A673 (cell line): ENCODE measurements at regions of chr12 and their contacts with region 1.

Region 1: GRCh38 chr12:57401165-57401564 is 29.7 kb downstream of the R3HDM2 start:
- DNase-seq: no peak
- H3K4me3 ChIP-seq: no peak overlapping the region
- H3K27ac ChIP-seq: no peak overlapping the region
- H3K4me1 ChIP-seq: no peaks in the 10 kb centered on the region
- H3K27me3 ChIP-seq: no peaks in the 10 kb centered on the region
- CTCF ChIP-seq: no peak

Region 2: DNA sequence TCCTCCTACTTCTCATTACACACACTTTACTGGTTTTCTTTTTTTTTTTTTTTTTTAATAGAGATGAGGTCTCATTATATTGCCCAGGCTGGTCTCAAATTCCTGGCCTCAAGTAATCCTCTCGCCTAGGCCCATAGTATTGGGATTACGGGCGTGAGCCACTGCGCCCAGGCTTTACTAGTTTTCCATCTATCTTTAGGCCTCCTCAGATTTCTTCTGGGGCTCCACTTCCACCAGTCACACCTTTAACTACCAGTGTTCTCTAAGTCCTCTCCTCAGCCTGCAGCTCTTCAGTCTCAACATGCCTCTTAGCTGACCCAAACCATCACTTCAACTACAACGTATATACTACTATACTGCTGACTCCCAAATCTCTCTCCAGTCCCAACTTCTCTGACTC is 19.3 kb after region 1 on chr12:
- CTCF ChIA-PET with region 1: no interaction called
- POLR2A ChIA-PET with region 1: no interaction called
- intact Hi-C with region 1: loop called (anchors 1 kb)
- DNase-seq: no peak
- H3K4me3 ChIP-seq: no peak overlapping the region
- H3K27ac ChIP-seq: no peak overlapping the region
- H3K4me1 ChIP-seq: no peaks in the 10 kb centered on the region
- H3K27me3 ChIP-seq: no peaks in the 10 kb centered on the region
- CTCF ChIP-seq: no peak